ENCODE measurements at regions of chr7 and their contacts with region 1.

Region 1: DNA sequence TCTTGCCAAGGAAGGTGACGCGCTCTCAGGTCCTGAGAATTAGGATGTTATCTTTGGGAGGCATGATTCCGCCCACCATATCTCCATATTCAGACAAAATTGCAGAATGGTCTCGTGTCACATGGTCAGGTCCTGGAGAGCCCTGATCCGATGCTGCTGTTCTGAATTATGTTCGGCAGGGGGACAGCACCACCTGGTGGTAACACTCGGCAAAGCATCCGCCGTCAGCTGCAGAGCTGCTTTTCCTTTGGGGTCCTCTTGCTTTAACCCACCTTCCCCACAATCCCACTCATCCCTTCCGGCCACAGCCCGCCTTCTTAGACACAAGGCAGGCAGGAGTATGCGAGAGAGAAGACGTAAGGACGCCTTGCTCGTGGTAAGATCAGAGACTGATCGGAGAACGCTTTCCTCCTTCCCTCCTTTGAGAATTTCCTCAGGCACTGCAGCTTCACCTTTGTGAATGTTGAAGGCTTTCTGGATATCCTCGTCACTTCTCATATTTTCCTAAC is 327.8 kb upstream of the C7orf33 start:
- H3K4me3 Mint-ChIP-seq: peak overlapping the region; percentile 17
- H3K27ac Mint-ChIP-seq: no peak overlapping the region
- H3K4me1 Mint-ChIP-seq: peaks cover 11% of the 10 kb centered on the region
- H3K27me3 Mint-ChIP-seq: peaks cover 7% of the 10 kb centered on the region

Region 2: DNA sequence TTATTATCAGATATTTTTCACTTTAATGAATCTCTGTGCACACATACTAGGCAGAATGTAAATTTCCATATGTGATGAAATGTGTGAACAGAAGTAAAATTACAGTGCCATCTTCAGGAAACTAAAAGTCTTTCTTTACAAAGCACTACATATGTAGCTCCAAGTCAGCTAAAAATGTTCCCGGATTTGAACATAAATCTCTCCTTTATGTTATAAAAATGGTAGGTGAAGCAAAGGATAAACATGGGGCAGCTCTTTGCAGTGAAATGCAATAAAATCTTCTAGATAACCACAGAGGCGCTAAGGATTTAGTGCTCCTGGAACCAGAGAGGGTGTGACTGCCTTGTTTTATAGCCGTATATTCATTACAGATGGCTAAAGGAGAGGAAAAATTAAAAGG is 222.8 kb after region 1 on chr7:
- intact Hi-C with region 1: loop called (anchors 5 kb)
- H3K4me3 Mint-ChIP-seq: no peak overlapping the region
- H3K27ac Mint-ChIP-seq: no peak overlapping the region
- H3K4me1 Mint-ChIP-seq: no peaks in the 10 kb centered on the region
- H3K27me3 Mint-ChIP-seq: peaks cover 3% of the 10 kb centered on the region

Region 3: DNA sequence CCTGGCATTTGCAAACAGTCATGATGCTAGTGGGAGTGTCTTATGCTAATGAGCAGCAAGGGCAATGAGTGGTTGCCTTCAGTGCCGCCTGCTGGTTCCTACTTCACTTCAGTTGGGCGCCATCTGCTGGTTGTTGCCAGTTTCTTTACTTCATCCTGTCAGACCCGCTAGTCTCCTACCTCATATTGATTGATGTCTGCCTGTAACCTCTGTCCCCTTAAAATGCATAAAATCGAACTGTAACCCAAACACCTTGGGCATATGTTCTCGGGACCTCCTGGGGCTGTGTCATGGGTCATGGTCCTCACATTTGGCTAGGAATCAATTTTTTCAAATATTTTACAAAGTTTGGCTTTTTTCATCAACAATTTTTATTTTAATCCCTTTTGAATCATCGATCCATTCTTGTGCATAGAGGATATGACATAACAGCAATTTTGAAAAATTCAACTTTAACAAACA is 265.0 kb after region 1 on chr7:
- intact Hi-C with region 1: loop called (anchors 10 kb)
- H3K4me3 Mint-ChIP-seq: no peak overlapping the region
- H3K27ac Mint-ChIP-seq: no peak overlapping the region
- H3K4me1 Mint-ChIP-seq: peaks cover 4% of the 10 kb centered on the region
- H3K27me3 Mint-ChIP-seq: peaks cover 16% of the 10 kb centered on the region